CD4-positive, alpha-beta memory T cell (primary cell): ENCODE measurements at regions of chr5 and their contacts with region 1.

Region 1: GRCh38 chr5:140401362-140402257 is at the start of gene ANKHD1:
- DNase-seq: peak; percentile 96 to 100 (median 99)
- H3K4me3 ChIP-seq: peak within 1 kb of the TSS; percentile 90 to 99
- H3K4me3 Mint-ChIP-seq: no peak within 1 kb of the TSS
- H3K27ac ChIP-seq: peak within 1 kb of the TSS; percentile 90
- H3K27ac Mint-ChIP-seq: no peak within 1 kb of the TSS
- H3K4me1 ChIP-seq: peaks cover 45% of the 10 kb centered on the region
- H3K4me1 Mint-ChIP-seq: peaks cover 23 to 45% (median 33%) of the 10 kb centered on the region in 4 donors
- H3K27me3 ChIP-seq: no peaks in the 10 kb centered on the region
- H3K27me3 Mint-ChIP-seq: no peaks in the 10 kb centered on the region
- total RNA-seq, gene ANKHD1: 228 to 252 TPM

Region 2: DNA sequence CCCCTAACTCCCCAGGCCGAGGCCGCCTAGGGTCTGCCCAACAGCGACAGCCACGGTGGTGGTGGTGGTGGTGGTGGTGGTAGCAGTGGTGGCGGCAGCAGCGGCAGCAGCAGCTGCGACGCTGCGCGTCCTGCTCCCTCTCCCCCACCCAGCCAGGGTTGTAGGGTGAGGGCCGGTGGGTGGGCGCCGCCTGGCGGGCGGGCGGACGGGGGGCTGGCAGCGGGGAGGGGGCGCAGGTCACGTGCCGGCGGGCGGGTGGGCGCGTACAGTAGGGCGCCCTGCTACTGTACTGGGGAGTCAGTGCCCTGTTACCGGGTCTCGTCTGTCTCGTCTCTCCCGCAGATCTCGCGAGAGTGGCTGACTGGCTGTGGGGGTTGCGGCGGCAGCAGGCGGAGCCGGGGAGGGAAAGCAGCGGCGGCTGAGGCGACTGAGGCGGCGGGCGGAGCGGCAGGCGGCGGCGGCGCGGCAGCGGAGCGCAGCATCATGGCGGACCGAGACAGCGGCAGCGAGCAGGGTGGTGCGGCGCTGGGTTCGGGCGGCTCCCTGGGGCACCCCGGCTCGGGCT is 287.8 kb before region 1 on chr5 and contains the start of gene PURA:
- CTCF ChIA-PET with region 1: no interaction called
- POLR2A ChIA-PET with region 1: interaction called, 4 read pairs
- intact Hi-C with region 1: loop called (anchors 1 kb)
- DNase-seq: peak; percentile 97 to 98 (median 98)
- H3K4me3 ChIP-seq: peak within 1 kb of the TSS; percentile 76 to 88
- H3K4me3 Mint-ChIP-seq: peak within 1 kb of the TSS; percentile 94 to 100 (median 96)
- H3K27ac ChIP-seq: peak within 1 kb of the TSS; percentile 80
- H3K27ac Mint-ChIP-seq: peak within 1 kb of the TSS; percentile 93 to 98 (median 97)
- H3K4me1 ChIP-seq: peaks cover 79% of the 10 kb centered on the region
- H3K4me1 Mint-ChIP-seq: peaks cover 43 to 81% (median 67%) of the 10 kb centered on the region in 4 donors
- H3K27me3 ChIP-seq: no peaks in the 10 kb centered on the region
- H3K27me3 Mint-ChIP-seq: no peaks in the 10 kb centered on the region
- total RNA-seq, gene PURA: 31.2 to 36.2 TPM

Region 3: DNA sequence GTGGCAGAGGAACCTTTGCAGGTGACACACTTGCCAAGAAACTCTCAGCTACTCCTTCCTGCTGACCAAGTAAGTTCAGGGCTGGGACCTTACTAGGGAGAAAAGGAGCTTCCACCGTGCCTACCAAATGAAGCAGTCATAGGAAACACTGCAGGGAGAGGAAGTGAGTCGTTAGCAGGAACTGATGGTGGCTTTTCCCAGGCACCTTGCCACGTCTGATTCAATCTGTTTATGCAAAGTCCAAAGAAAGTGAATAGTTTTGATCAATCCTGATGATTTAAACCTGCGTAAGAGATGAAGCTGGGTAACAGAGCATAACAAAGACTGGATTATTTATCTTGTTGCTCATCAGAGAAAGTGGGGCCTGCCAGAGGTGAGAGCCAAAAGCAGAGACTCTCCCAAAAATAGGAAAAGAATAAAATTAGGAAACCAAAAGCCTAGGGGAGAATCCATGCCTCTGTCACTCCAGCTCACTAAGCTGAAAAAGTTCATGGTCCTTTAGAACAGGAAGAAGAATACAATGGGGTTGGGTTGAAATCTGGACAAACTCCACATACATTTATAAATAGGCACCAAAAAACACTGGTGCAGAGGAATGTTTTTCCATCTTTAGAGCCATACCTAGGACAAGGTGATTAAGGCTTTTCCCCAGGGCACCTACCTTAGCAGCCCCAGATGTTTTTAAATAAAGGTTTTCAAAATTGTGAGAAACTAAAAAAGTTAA is 89.4 kb before region 1 on chr5:
- CTCF ChIA-PET with region 1: no interaction called
- POLR2A ChIA-PET with region 1: no interaction called
- intact Hi-C with region 1: no loop called
- DNase-seq: no peak
- H3K4me3 ChIP-seq: no peak overlapping the region
- H3K4me3 Mint-ChIP-seq: no peak overlapping the region
- H3K27ac ChIP-seq: no peak overlapping the region
- H3K27ac Mint-ChIP-seq: no peak overlapping the region
- H3K4me1 ChIP-seq: no peaks in the 10 kb centered on the region
- H3K4me1 Mint-ChIP-seq: no peaks in the 10 kb centered on the region
- H3K27me3 ChIP-seq: no peaks in the 10 kb centered on the region
- H3K27me3 Mint-ChIP-seq: peaks cover 0 to 3% of the 10 kb centered on the region in 2 donors

Region 4: GRCh38 chr5:140547508-140548299 is 146.1 kb after region 1 on chr5 and contains the start of gene EIF4EBP3:
- CTCF ChIA-PET with region 1: no interaction called
- POLR2A ChIA-PET with region 1: interaction called, 30 read pairs
- intact Hi-C with region 1: no loop called
- DNase-seq: peak; percentile 84 to 92 (median 87)
- H3K4me3 ChIP-seq: peak within 1 kb of the TSS; percentile 57 to 76
- H3K4me3 Mint-ChIP-seq: peak within 1 kb of the TSS; percentile 85 to 93 (median 89)
- H3K27ac ChIP-seq: peak within 1 kb of the TSS; percentile 77
- H3K27ac Mint-ChIP-seq: peak within 1 kb of the TSS; percentile 91 to 97 (median 97)
- H3K4me1 ChIP-seq: peaks cover 30% of the 10 kb centered on the region
- H3K4me1 Mint-ChIP-seq: peaks cover 19 to 50% (median 26%) of the 10 kb centered on the region in 4 donors
- H3K27me3 ChIP-seq: no peaks in the 10 kb centered on the region
- H3K27me3 Mint-ChIP-seq: no peaks in the 10 kb centered on the region
- total RNA-seq, gene EIF4EBP3: 15.3 to 18.8 TPM

Region 5: GRCh38 chr5:140632150-140633020 is 230.8 kb after region 1 on chr5:
- CTCF ChIA-PET with region 1: no interaction called
- POLR2A ChIA-PET with region 1: interaction called, 18 read pairs
- intact Hi-C with region 1: no loop called
- DNase-seq: peak; percentile 50 to 66 (median 55)
- H3K4me3 ChIP-seq: peak overlapping the region; percentile 61 to 73
- H3K4me3 Mint-ChIP-seq: peak overlapping the region; percentile 90 to 96 (median 90)
- H3K27ac ChIP-seq: peak overlapping the region; percentile 41
- H3K27ac Mint-ChIP-seq: peak overlapping the region; percentile 68 to 93 (median 89)
- H3K4me1 ChIP-seq: peaks cover 13% of the 10 kb centered on the region
- H3K4me1 Mint-ChIP-seq: peaks cover 10 to 30% (median 20%) of the 10 kb centered on the region in 4 donors
- H3K27me3 ChIP-seq: no peaks in the 10 kb centered on the region
- H3K27me3 Mint-ChIP-seq: peaks cover 0 to 2% of the 10 kb centered on the region in 2 donors

Region 6: DNA sequence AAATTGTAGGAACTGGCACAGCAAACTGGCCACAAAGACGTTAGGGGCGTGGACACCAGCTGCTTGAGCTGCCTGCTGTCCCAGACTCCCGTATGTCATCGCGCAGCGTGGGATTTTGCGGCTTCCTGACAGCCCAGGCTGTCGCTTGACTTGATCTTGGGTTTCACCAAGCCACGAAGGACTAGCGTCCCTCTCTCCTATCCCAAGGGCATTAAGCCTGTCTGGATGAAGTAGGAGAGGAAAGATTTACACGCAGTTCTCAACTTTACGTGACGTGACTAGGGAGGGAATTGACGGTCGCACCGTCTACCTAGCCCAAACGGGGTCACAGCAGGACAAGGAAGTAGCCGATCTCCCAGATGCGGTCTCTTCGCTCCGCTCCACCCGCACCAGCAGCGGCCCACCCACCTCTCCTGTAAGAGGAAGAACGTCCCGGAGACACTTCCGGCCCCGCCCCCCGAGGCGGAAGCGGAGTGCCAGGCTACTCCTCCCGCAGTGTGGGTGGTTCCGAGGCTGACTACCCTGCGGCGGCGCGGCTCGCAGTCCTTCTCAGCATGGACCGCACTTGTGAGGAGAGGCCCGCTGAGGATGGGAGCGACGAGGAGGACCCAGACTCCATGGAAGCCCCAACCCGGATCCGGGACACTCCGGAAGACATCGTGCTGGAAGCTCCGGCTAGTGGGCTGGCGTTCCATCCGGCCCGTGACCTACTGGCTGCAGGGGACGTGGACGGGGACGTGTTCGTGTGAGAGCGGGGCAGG is 262.9 kb after region 1 on chr5 and contains the start of gene WDR55:
- CTCF ChIA-PET with region 1: no interaction called
- POLR2A ChIA-PET with region 1: interaction called, 19 read pairs
- intact Hi-C with region 1: loop called (anchors 1 kb)
- DNase-seq: peak; percentile 94 to 99 (median 94)
- H3K4me3 ChIP-seq: peak within 1 kb of the TSS; percentile 90 to 98
- H3K4me3 Mint-ChIP-seq: peak within 1 kb of the TSS; percentile 96 to 99 (median 98)
- H3K27ac ChIP-seq: peak within 1 kb of the TSS; percentile 95
- H3K27ac Mint-ChIP-seq: peak within 1 kb of the TSS; percentile 98 to 99 (median 99)
- H3K4me1 ChIP-seq: peaks cover 20% of the 10 kb centered on the region
- H3K4me1 Mint-ChIP-seq: peaks cover 27 to 52% (median 34%) of the 10 kb centered on the region in 4 donors
- H3K27me3 ChIP-seq: no peaks in the 10 kb centered on the region
- H3K27me3 Mint-ChIP-seq: no peaks in the 10 kb centered on the region
- total RNA-seq, gene WDR55: 47.1 to 49.6 TPM

Region 7: GRCh38 chr5:140677947-140678346 is 276.3 kb after region 1 on chr5:
- CTCF ChIA-PET with region 1: no interaction called
- POLR2A ChIA-PET with region 1: no interaction called
- intact Hi-C with region 1: no loop called
- DNase-seq: no peak
- H3K4me3 ChIP-seq: no peak overlapping the region
- H3K4me3 Mint-ChIP-seq: no peak overlapping the region
- H3K27ac ChIP-seq: no peak overlapping the region
- H3K27ac Mint-ChIP-seq: peak overlapping the region in 1 of 7 donors; percentile 57
- H3K4me1 ChIP-seq: no peaks in the 10 kb centered on the region
- H3K4me1 Mint-ChIP-seq: peaks cover 0 to 6% (median 3%) of the 10 kb centered on the region in 4 donors
- H3K27me3 ChIP-seq: no peaks in the 10 kb centered on the region
- H3K27me3 Mint-ChIP-seq: no peaks in the 10 kb centered on the region

Region 8: GRCh38 chr5:140710899-140711552 is 309.4 kb after region 1 on chr5:
- CTCF ChIA-PET with region 1: interaction called, 4 read pairs
- POLR2A ChIA-PET with region 1: interaction called, 57 read pairs
- intact Hi-C with region 1: loop called (anchors 1 kb)
- DNase-seq: peak; percentile 86 to 95 (median 93)
- H3K4me3 ChIP-seq: peak overlapping the region; percentile 71 to 92
- H3K4me3 Mint-ChIP-seq: peak overlapping the region; percentile 96 to 100 (median 99)
- H3K27ac ChIP-seq: peak overlapping the region; percentile 82
- H3K27ac Mint-ChIP-seq: peak overlapping the region; percentile 97 to 100 (median 99)
- H3K4me1 ChIP-seq: peaks cover 19% of the 10 kb centered on the region
- H3K4me1 Mint-ChIP-seq: peaks cover 15 to 32% (median 23%) of the 10 kb centered on the region in 4 donors
- H3K27me3 ChIP-seq: no peaks in the 10 kb centered on the region
- H3K27me3 Mint-ChIP-seq: peaks cover 0 to 8% of the 10 kb centered on the region in 2 donors